WTC11 (cell line): ENCODE measurements at regions of chr6 and their contacts with region 1.

Region 1: DNA sequence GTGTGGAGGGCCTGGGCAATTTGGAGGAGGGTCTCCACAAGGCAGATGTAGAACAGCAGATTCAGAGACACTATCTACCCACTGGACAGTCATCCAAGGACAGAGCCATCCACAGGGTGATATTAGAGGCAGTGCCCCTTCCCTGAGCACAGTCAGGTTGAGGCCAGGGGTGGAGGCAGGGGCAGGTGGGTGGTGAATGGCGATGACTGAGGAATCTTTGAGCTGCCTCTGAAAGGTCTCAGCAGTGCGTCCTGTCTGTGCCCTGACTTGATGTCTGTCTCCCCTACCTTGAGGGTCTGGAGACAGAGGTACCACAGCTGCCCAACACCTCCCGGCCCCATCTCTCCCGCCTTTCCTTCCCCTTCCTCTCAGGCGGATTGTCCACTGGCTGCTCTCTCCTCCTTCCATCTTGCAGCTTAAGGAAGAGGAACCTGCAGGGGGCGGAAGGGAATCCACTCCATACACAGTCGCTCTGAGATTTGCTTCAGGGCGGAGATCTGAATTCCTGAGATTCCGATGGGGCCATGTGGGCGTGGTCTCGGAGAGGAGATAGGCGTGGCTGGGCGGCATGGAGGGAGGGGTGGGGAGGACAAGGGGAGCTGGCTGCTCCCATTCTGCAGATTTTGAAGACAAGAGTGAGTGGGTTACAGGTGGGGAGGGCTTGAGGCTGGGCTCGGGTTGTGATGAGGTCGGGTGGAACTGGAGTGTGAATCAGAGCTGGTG is 1.7 kb downstream of the MUCL3 start:
- DNase-seq: peak; percentile 98
- ATAC-seq: peak; percentile 93
- H3K4me3 Mint-ChIP-seq: peak overlapping the region; percentile 17; the same call in 1 of the 2 replicates
- H3K27ac Mint-ChIP-seq: peak overlapping the region; percentile 83
- H3K4me1 Mint-ChIP-seq: peaks cover 44% of the 10 kb centered on the region
- H3K27me3 Mint-ChIP-seq: no peaks in the 10 kb centered on the region; the same call in 1 of the 2 replicates
- CTCF ChIP-seq: peak; percentile 36; the same call in 1 of the 2 replicates

Region 2: GRCh38 chr6:30821862-30822782 is 120.4 kb before region 1 on chr6:
- CTCF ChIA-PET with region 1: interaction called, 10 read pairs
- POLR2A ChIA-PET with region 1: no interaction called
- DNase-seq: no peak
- ATAC-seq: peak; percentile 59
- H3K4me3 Mint-ChIP-seq: no peak overlapping the region
- H3K27ac Mint-ChIP-seq: peak overlapping the region; percentile 54; the same call in 1 of the 2 replicates
- H3K4me1 Mint-ChIP-seq: peaks cover 30% of the 10 kb centered on the region
- H3K27me3 Mint-ChIP-seq: no peaks in the 10 kb centered on the region
- CTCF ChIP-seq: peak; percentile 18; the same call in 1 of the 2 replicates

Region 3: GRCh38 chr6:30931969-30932645 is 10.4 kb before region 1 on chr6 and contains the start of gene SFTA2:
- CTCF ChIA-PET with region 1: interaction called, 14 read pairs
- POLR2A ChIA-PET with region 1: no interaction called
- DNase-seq: no peak
- ATAC-seq: no peak
- H3K4me3 Mint-ChIP-seq: no peak within 1 kb of the TSS
- H3K27ac Mint-ChIP-seq: no peak within 1 kb of the TSS
- H3K4me1 Mint-ChIP-seq: peaks cover 11% of the 10 kb centered on the region
- H3K27me3 Mint-ChIP-seq: no peaks in the 10 kb centered on the region
- CTCF ChIP-seq: no peak
- total RNA-seq, gene SFTA2: 0.66 to 0.80 TPM in 2 of 3 replicates, not detected in the other

Region 4: GRCh38 chr6:30955367-30956042 is 13.0 kb after region 1 on chr6:
- CTCF ChIA-PET with region 1: interaction called, 29 read pairs
- POLR2A ChIA-PET with region 1: no interaction called
- DNase-seq: peak; percentile 80
- ATAC-seq: peak; percentile 82
- H3K4me3 Mint-ChIP-seq: peak overlapping the region; percentile 64
- H3K27ac Mint-ChIP-seq: no peak overlapping the region
- H3K4me1 Mint-ChIP-seq: peaks cover 24% of the 10 kb centered on the region
- H3K27me3 Mint-ChIP-seq: peaks cover 69% of the 10 kb centered on the region
- CTCF ChIP-seq: no peak

Region 5: DNA sequence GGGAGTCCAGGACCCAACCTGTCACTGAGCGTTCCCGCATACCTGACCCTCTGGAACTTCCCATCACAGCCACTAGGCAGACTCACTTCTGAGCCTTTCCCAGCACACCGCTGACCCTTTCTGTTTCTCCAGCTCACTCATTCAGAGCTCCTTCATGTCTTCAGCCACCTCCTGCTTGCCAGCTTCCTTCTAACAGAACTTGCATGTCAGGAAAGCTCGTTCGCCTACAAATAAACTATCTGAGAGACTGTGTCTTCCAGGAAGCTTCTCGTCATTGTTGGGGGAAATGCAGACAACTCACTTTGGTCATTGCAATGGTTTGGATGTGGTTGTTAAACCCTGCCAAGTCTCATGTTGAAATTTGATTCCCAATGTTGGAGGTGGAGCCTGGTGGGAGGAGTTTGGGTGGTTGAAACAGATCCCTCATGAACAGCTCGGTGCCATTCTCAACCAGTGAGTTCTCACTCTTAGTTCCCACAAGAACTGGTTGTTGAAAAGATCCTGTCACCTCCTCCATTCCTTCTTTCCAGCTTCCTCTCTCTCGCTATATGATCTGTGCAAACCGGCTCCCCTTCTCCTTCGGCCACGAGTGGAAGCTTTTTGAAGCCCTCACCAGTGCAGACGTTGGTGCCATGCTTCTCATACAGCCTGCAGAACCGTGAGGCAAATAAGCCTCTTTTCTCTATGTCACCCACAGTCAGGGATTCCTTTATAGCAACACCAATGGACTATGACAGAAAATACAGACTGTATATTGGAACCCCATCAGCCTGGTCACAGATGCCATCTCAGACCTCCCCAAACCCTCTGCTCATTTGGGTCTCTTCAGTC is 39.7 kb after region 1 on chr6:
- CTCF ChIA-PET with region 1: interaction called, 22 read pairs
- POLR2A ChIA-PET with region 1: no interaction called
- DNase-seq: peak; percentile 67
- ATAC-seq: peak; percentile 99
- H3K4me3 Mint-ChIP-seq: peak overlapping the region; percentile 57
- H3K27ac Mint-ChIP-seq: peak overlapping the region; percentile 92
- H3K4me1 Mint-ChIP-seq: peaks cover 21% of the 10 kb centered on the region
- H3K27me3 Mint-ChIP-seq: no peaks in the 10 kb centered on the region; the same call in none of the 2 replicates
- CTCF ChIP-seq: no peak

Region 6: GRCh38 chr6:31016659-31017299 is 74.3 kb after region 1 on chr6:
- CTCF ChIA-PET with region 1: no interaction called
- POLR2A ChIA-PET with region 1: no interaction called
- DNase-seq: no peak
- ATAC-seq: no peak
- H3K4me3 Mint-ChIP-seq: no peak overlapping the region
- H3K27ac Mint-ChIP-seq: no peak overlapping the region
- H3K4me1 Mint-ChIP-seq: peaks cover 3% of the 10 kb centered on the region; the same call in 1 of the 2 replicates
- H3K27me3 Mint-ChIP-seq: peaks cover 19% of the 10 kb centered on the region
- CTCF ChIP-seq: no peak

Region 7: GRCh38 chr6:31042806-31043205 is 100.3 kb after region 1 on chr6:
- CTCF ChIA-PET with region 1: interaction called, 12 read pairs
- POLR2A ChIA-PET with region 1: no interaction called
- DNase-seq: peak; percentile 72
- ATAC-seq: peak; percentile 94
- H3K4me3 Mint-ChIP-seq: no peak overlapping the region
- H3K27ac Mint-ChIP-seq: no peak overlapping the region
- H3K4me1 Mint-ChIP-seq: no peaks in the 10 kb centered on the region; the same call in 1 of the 2 replicates
- H3K27me3 Mint-ChIP-seq: no peaks in the 10 kb centered on the region
- CTCF ChIP-seq: peak; percentile 54